Common myeloid progenitor, CD34-positive (primary cell): ENCODE measurements at regions of chr11 and their contacts with region 1.

Region 1: DNA sequence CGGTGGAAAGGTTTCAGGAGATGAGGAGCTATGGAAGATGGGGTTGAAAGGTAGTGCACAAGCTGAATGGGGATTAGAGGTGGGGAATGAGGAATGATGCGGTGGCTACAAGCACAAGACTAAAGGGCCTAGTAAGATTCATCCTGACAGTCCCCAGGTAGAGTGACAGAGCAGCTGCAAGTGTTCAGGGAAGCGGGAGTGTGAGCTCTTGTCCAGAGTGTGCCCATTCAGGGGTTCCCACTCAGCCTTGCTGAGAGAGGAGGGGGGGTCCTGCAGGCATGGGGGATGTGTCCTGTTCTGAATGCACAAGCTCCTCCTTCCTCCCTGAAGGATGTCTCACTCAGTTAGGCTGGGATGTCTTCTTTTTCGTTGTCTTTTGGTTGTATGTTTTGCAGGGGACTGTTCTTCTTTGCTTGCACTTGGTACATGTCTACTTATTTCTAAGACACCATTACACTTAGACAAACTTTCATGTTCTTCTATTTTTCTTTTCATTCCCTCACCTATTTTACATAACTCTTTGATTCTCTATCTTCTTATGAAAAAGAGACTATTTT is 25.8 kb upstream of the CLPB start:
- DNase-seq: no peak
- H3K4me3 ChIP-seq: no peak overlapping the region
- H3K27ac ChIP-seq: no peak overlapping the region
- H3K4me1 ChIP-seq: no peaks in the 10 kb centered on the region
- H3K27me3 ChIP-seq: peaks cover 0 to 10% (median 0%) of the 10 kb centered on the region in 5 experiments

Region 2: GRCh38 chr11:72425053-72425980 is 34.9 kb before region 1 on chr11:
- CTCF ChIA-PET with region 1: no interaction called
- POLR2A ChIA-PET with region 1: no interaction called
- DNase-seq: peak in 1 of 3 donors; percentile 35
- H3K4me3 ChIP-seq: no peak overlapping the region
- H3K27ac ChIP-seq: no peak overlapping the region
- H3K4me1 ChIP-seq: peaks cover 0 to 12% (median 5%) of the 10 kb centered on the region in 4 experiments
- H3K27me3 ChIP-seq: no peaks in the 10 kb centered on the region

Region 3: DNA sequence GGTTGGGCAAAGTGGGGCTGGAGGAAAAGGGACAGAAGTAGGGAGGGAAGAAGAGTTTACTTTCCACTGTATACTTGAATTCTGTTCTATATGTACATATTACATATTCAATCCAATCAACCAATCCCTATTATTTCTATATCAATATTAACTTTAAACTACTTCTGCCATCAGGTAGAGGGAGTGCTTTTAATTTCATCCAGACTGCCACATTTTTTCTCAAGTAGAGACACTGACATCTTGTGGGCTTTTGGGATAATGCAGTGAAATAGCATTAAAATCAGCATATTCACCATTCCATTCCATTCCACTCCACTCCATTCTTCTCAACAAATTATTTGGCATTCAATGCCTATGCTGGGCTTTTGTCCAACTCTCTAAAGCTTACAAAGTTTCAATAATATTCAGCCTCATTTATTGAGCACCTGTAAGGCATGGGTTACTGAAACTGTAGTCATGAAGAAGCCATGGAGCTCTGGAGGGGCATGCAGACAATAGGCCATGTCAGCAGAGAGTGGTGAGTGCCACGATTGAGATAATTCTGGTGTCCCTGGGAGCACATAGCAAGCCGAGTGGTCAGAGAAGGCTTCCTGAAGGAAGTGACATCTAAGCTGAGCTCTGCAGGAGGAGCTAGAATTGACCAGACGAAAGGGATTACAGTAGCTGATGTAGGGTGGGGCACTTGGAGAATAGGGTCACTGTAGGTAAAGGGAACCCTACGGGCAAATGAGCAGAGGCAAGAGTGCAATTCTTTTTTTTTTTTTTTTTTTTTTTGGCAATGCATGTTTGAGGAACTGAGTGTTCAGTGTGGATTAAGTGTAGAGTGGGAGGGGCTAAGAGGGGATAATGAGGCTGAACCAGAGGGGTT is 13.0 kb before region 1 on chr11:
- CTCF ChIA-PET with region 1: interaction called, 10 read pairs
- POLR2A ChIA-PET with region 1: no interaction called
- DNase-seq: peak; percentile 75 to 85 (median 85)
- H3K4me3 ChIP-seq: no peak overlapping the region
- H3K27ac ChIP-seq: no peak overlapping the region
- H3K4me1 ChIP-seq: peaks cover 0 to 6% (median 2%) of the 10 kb centered on the region in 4 experiments
- H3K27me3 ChIP-seq: peaks cover 0 to 2% (median 0%) of the 10 kb centered on the region in 5 experiments